ENCODE measurements at regions of chr1 and their contacts with region 1.

Region 1: GRCh38 chr1:212070720-212071302 is 35.3 kb downstream of the DTL start:
- DNase-seq: peak; percentile 72
- H3K4me3 Mint-ChIP-seq: no peak overlapping the region
- H3K27ac Mint-ChIP-seq: peak overlapping the region; percentile 13
- H3K4me1 Mint-ChIP-seq: no peaks in the 10 kb centered on the region
- H3K27me3 Mint-ChIP-seq: no peaks in the 10 kb centered on the region
- CTCF ChIP-seq: peak; percentile 97

Region 2: GRCh38 chr1:211903490-211904245 is 167.1 kb before region 1 on chr1:
- CTCF ChIA-PET with region 1: no interaction called
- POLR2A ChIA-PET with region 1: no interaction called
- intact Hi-C with region 1: no loop called
- DNase-seq: no peak
- H3K4me3 Mint-ChIP-seq: no peak overlapping the region
- H3K27ac Mint-ChIP-seq: no peak overlapping the region
- H3K4me1 Mint-ChIP-seq: no peaks in the 10 kb centered on the region
- H3K27me3 Mint-ChIP-seq: no peaks in the 10 kb centered on the region
- CTCF ChIP-seq: no peak

Region 3: GRCh38 chr1:212040629-212041028 is 30.2 kb before region 1 on chr1:
- CTCF ChIA-PET with region 1: interaction called, 43 read pairs
- POLR2A ChIA-PET with region 1: interaction called, 10 read pairs
- intact Hi-C with region 1: no loop called
- DNase-seq: peak; percentile 59
- H3K4me3 Mint-ChIP-seq: peak overlapping the region; percentile 24
- H3K27ac Mint-ChIP-seq: peak overlapping the region; percentile 25
- H3K4me1 Mint-ChIP-seq: peaks cover 57% of the 10 kb centered on the region
- H3K27me3 Mint-ChIP-seq: no peaks in the 10 kb centered on the region
- CTCF ChIP-seq: no peak

Region 4: DNA sequence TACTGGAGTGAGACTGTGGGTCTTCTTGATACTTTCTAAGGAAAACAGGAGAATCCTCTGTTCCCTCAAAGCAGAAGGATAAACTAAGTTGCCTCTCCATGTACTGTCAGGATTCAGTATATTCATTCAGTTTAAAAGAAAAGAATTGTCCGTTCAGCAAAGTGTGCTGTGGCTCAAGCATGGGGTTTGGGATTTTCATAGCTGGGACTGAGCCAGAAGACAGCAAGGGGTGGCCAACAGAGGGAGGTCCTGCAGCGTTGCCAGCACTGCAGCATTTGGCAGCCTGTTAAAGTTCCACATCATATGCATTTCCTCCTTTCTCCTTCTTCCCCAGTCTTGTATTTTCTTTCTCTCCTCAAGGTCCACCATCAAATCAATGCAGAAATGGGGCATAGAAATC is 39.8 kb after region 1 on chr1:
- CTCF ChIA-PET with region 1: interaction called, 37 read pairs
- POLR2A ChIA-PET with region 1: no interaction called
- intact Hi-C with region 1: no loop called
- DNase-seq: no peak
- H3K4me3 Mint-ChIP-seq: no peak overlapping the region
- H3K27ac Mint-ChIP-seq: no peak overlapping the region
- H3K4me1 Mint-ChIP-seq: no peaks in the 10 kb centered on the region
- H3K27me3 Mint-ChIP-seq: no peaks in the 10 kb centered on the region
- CTCF ChIP-seq: no peak

Region 5: DNA sequence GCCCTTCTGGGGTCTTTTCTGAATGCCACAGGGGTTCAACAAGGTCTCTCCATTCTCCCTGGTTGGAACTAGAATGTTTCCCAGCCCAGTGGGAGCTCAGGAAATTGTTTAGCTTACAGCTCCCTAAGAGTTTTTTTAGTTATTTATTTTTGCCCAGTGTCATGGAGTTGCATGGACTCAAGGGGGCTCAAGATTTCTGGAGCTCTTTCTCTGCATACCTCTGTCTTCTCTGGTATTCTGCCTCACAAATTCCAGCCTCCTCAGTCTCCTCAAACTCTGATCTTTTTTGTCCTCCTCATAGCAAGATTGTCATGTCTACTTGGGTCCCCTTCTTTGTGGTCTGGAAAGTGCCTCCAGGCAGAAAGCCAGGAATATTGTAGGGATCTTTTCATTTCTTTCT is 198.5 kb after region 1 on chr1:
- CTCF ChIA-PET with region 1: interaction called, 21 read pairs
- POLR2A ChIA-PET with region 1: no interaction called
- intact Hi-C with region 1: no loop called
- DNase-seq: no peak
- H3K4me3 Mint-ChIP-seq: no peak overlapping the region
- H3K27ac Mint-ChIP-seq: no peak overlapping the region
- H3K4me1 Mint-ChIP-seq: no peaks in the 10 kb centered on the region
- H3K27me3 Mint-ChIP-seq: no peaks in the 10 kb centered on the region
- CTCF ChIP-seq: no peak

Region 6: DNA sequence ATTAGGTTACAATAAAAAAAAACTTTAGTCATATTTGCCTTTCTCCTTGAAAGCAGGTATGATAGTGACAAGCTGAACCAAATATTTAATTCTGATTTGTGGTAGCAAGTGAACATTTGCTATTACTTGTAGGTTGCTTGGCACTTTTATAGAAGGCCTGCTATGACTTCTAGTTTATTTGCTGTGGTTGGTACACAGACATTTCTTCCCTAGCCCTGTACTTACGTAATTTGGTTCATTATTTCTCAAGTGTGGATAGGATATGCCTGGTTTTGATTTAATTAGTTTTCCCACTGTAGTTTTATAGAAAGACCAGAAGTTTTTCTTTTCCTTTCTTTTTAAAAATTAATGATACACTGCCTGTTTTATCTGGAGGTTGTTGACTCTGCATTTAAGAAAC is 270.3 kb after region 1 on chr1:
- CTCF ChIA-PET with region 1: interaction called, 10 read pairs
- POLR2A ChIA-PET with region 1: interaction called, 3 read pairs
- intact Hi-C with region 1: no loop called
- DNase-seq: no peak
- H3K4me3 Mint-ChIP-seq: no peak overlapping the region
- H3K27ac Mint-ChIP-seq: no peak overlapping the region
- H3K4me1 Mint-ChIP-seq: no peaks in the 10 kb centered on the region
- H3K27me3 Mint-ChIP-seq: no peaks in the 10 kb centered on the region
- CTCF ChIP-seq: no peak

Region 7: GRCh38 chr1:212440419-212440818 is 369.6 kb after region 1 on chr1:
- CTCF ChIA-PET with region 1: interaction called, 15 read pairs
- POLR2A ChIA-PET with region 1: no interaction called
- intact Hi-C with region 1: no loop called
- DNase-seq: no peak
- H3K4me3 Mint-ChIP-seq: no peak overlapping the region
- H3K27ac Mint-ChIP-seq: no peak overlapping the region
- H3K4me1 Mint-ChIP-seq: peaks cover 20% of the 10 kb centered on the region
- H3K27me3 Mint-ChIP-seq: no peaks in the 10 kb centered on the region
- CTCF ChIP-seq: no peak

Measured in MCF 10A (cell line).